ENCODE measurements at regions of chr4 and their contacts with region 1.

Region 1: GRCh38 chr4:10554694-10555093 is 97.5 kb upstream of the ZNF518B start:
- DNase-seq: no peak
- ATAC-seq: peak; percentile 73

Region 2: DNA sequence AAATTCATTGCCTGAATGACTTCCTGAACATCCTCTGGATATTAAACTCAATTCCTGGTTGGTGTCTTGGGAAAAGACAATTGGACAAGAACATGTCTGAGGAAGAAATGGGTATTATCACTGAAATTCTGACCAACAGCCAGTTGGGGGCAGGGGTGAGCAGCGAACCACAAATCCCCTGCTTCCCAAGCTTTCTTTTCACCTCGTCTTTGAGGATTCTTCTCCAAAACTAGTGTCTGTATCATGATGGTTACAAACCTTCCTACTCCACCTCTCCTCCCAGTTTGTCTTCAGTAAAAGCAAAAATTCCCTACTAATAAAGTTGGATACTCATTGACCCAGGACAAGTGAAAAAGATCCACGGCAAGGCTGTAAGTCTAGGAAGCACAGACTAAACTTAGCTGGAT is 389.8 kb before region 1 on chr4:
- intact Hi-C with region 1: loop called (anchors 1 kb)
- DNase-seq: no peak
- ATAC-seq: no peak

Region 3: GRCh38 chr4:10403633-10404445 is 150.9 kb before region 1 on chr4:
- intact Hi-C with region 1: loop called (anchors 5 kb)
- DNase-seq: no peak
- ATAC-seq: no peak

Region 4: DNA sequence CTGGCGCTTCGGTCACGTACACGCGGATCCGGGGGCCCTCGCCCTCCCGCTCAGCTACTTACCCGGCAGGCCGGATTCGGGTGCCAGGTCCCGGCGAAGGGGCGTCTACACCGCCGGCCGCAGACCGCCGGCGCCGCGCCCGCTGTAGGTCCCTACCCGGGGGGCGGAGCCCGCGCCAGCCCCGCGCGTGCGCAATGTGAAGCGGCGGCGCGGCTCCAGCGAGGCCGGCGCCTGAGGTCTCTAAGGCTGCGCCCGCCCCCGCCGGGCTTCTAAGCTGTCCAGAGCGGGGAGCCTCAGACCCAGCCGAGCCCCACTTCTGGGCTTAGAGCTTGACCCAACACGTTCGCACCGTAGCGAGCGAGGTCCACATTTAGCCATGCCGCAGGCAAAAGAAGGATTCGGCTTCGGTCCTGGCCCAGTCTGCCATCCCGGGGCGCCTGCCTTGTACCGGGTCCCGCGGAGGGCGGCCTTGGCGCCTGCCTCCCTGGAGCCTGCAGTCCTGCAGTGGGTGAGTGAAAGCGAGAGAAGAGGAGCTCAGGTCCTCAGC is 97.4 kb before region 1 on chr4 and contains the start of gene ZNF518B:
- intact Hi-C with region 1: loop called (anchors 5 kb)
- DNase-seq: peak; percentile 87
- ATAC-seq: peak; percentile 93
- total RNA-seq, gene ZNF518B: 22.8 TPM

Region 5: DNA sequence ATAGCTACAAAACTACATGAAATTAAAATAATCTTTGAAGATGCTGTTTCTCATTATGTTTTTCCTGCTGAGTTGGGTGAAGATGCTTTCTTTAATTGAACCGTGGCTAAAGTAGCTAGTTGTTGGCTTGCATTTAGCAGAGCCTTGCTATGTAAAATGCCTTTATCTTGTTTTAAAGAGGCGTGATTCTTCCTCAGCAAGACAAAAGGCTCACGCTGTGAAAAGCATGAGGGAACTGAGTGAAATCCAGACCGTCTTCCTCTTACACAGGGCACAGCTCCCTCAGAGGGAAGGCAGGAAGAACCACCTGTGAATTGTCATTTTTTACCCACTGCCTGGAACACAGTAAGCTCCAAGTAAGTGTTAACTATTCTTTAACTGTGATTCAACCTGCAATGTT is 58.5 kb before region 1 on chr4:
- intact Hi-C with region 1: no loop called
- DNase-seq: no peak
- ATAC-seq: no peak

Region 6: DNA sequence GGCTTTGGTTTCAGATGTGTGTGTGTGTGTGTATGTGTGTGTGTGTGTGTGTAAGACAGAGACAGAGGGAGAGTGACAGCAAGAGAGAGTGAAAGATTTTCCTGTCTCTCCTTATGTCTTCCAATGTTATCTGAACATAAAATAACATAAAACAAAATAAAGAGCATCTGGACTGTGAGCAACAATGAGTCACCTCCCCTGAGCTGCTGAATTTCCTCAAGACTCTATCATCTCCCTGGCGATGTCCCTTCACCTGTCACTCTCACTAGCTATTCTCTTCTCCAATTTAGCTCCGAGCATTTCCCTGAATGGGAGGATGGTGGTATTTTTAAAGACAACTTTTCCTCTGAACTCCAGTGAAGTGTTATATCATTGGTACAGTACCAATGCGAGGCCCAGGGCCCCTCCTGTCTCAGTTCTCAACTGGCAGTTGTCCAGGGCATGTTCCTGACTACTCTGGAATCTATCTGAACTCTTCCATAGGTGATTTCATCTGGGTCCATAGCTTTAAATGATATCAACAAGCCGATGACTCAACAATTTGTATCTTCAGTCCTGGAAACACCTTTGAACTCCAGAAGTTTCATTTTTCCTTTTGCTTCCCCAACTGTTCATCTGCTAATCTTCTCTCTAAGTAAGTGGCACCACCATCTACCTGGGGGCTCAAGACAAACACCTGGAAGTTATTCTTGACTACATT is 324.9 kb after region 1 on chr4:
- intact Hi-C with region 1: no loop called
- DNase-seq: no peak
- ATAC-seq: no peak